Calu3 (cell line): ENCODE measurements at regions of chr2 and their contacts with region 1.

Region 1: DNA sequence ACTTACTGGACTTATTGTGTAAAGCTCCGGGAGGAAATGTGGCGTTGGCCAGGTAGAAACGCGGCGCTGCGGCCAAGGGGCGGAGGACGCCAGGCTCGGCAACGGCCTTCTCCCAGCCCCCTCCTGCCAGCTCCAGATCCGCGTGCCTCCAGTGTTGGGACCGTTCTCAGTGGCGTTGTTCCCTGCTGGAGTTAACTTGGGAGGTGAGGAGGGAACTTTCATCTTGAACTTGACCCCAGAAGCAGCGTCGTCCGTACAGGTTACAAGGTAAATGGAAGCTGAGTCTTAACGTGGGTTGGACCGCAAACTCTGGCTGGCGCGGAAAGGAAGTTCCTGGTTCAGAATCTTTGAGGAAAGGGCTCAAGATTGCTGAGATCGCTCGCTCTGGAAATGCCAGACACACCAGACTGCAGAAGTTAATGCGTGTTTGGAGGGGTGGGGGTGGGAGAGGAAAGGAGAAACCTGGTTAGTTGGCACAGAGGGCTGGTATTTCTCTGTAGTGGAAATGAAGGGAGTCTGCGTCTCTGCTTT is 1.3 kb downstream of the TANC1 start:
- DNase-seq: peak; percentile 50
- H3K4me3 Mint-ChIP-seq: peak overlapping the region; percentile 99
- H3K27ac Mint-ChIP-seq: peak overlapping the region; percentile 88
- H3K4me1 Mint-ChIP-seq: peaks cover 43% of the 10 kb centered on the region
- H3K27me3 Mint-ChIP-seq: no peaks in the 10 kb centered on the region
- CTCF ChIP-seq: no peak

Region 2: DNA sequence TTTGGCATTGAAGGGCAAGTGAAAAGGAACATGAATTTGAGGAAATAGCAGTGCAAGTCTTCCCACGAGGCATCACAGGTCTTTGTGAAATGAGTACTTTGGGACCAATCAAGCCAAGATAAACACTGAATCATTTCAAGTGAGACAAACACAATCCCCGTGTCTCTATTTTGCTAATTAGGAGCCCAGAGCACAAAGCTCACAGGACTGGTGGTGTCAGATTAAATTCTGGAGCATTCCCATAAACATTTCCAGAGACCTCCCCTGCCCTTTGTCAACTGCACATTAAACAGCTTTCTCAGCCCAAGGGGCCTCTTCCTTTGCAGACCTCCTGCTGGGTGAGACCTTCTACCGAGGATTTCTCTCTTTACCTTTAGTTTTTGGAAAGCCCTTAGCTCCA is 123.9 kb before region 1 on chr2:
- CTCF ChIA-PET with region 1: no interaction called
- intact Hi-C with region 1: no loop called
- DNase-seq: no peak
- H3K4me3 Mint-ChIP-seq: no peak overlapping the region
- H3K27ac Mint-ChIP-seq: no peak overlapping the region
- H3K4me1 Mint-ChIP-seq: no peaks in the 10 kb centered on the region
- H3K27me3 Mint-ChIP-seq: peaks cover 26% of the 10 kb centered on the region
- CTCF ChIP-seq: no peak

Region 3: DNA sequence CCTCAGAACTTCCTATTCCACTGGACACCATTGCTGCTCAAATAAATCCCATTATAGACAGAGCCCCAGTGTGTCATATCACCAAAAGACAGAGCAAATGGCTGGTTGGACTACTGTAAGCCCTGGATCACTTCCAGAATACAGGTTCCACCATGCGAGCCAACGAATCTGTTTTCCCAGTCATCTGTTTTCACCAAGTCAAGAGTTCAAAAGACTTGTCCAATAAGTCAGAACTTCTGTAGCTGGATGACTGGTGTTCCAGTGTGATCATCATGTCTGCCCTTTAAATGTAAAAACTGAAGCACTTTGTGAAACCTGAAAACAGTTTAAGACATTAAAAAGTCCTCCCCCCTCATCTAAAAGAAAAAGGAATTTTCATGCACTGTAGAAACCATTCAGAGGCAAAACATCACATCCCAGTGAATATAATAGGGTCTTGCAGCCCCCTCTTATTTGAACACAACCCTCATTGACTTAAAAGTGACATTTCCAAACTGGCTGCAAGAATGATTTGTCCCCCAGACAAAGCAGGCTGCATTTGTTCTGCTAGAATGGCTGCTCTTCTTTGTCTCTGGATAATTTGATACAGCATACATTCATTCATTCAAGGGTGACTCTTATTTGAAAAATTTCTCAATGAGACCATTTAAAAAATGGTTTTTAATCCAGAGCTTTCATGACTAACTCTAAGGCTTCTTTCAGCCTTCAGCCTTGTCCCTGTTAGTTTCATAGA is 65.9 kb before region 1 on chr2:
- CTCF ChIA-PET with region 1: no interaction called
- intact Hi-C with region 1: loop called (anchors 5 kb)
- DNase-seq: no peak
- H3K4me3 Mint-ChIP-seq: no peak overlapping the region
- H3K27ac Mint-ChIP-seq: no peak overlapping the region
- H3K4me1 Mint-ChIP-seq: no peaks in the 10 kb centered on the region
- H3K27me3 Mint-ChIP-seq: no peaks in the 10 kb centered on the region
- CTCF ChIP-seq: no peak

Region 4: DNA sequence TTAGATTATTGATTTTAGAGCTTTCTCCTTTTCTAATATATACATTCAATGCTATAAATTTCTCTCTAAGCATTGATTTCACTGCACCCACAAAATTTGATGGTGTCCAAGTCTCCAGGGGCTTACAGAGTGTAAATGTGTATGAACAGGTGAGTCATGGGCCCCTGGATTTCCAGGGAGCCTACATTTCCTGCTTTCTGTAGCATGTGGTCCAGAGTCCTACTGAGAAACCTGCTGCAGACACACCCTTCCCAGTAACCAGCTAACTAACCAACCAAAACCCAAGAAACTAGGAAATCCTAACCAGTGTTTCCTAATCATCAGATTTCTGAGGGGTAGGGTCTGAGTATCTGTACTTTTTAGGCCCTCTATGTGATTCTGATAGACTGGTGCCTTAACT is 40.8 kb before region 1 on chr2:
- CTCF ChIA-PET with region 1: no interaction called
- intact Hi-C with region 1: loop called (anchors 2 kb)
- DNase-seq: peak; percentile 44
- H3K4me3 Mint-ChIP-seq: no peak overlapping the region
- H3K27ac Mint-ChIP-seq: peak overlapping the region; percentile 66
- H3K4me1 Mint-ChIP-seq: peaks cover 70% of the 10 kb centered on the region
- H3K27me3 Mint-ChIP-seq: no peaks in the 10 kb centered on the region
- CTCF ChIP-seq: no peak

Region 5: DNA sequence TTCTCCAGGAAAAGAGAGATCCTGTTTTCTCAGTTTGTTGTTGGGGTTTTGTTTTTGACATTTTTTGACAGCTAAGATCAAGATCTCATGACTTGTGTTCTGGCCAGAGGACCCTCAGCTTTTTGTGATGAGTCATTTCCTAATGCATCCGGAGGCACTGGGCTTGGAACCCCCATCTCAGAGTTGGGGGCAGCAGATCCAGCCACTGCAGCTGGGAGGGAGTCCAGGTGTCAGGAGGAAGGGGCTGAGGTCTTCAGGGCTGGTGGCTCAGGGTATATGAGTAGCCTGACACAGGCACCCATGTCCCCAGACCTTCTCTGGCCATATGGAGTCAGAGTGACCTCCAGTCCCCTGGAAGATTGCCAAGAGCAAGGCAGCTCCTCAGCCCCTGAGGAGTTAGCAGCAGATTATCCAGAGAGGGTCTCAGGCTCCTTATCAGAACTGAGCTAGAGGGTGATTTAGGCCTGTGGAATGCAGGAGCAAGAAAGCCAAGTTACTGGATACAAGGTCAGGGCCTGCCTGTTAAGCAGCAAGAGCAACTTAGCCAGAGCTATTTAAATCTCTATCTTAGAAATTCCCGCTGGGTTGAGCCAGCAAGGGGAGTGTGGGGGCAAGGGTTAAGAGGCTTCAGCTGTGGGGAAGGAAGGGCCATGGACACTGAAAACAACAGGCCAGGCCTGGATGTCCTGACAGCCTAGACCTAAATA is 61.0 kb after region 1 on chr2:
- CTCF ChIA-PET with region 1: no interaction called
- intact Hi-C with region 1: loop called (anchors 5 kb)
- DNase-seq: peak; percentile 23
- H3K4me3 Mint-ChIP-seq: no peak overlapping the region
- H3K27ac Mint-ChIP-seq: peak overlapping the region; percentile 28
- H3K4me1 Mint-ChIP-seq: peaks cover 33% of the 10 kb centered on the region
- H3K27me3 Mint-ChIP-seq: no peaks in the 10 kb centered on the region
- CTCF ChIP-seq: no peak

Region 6: DNA sequence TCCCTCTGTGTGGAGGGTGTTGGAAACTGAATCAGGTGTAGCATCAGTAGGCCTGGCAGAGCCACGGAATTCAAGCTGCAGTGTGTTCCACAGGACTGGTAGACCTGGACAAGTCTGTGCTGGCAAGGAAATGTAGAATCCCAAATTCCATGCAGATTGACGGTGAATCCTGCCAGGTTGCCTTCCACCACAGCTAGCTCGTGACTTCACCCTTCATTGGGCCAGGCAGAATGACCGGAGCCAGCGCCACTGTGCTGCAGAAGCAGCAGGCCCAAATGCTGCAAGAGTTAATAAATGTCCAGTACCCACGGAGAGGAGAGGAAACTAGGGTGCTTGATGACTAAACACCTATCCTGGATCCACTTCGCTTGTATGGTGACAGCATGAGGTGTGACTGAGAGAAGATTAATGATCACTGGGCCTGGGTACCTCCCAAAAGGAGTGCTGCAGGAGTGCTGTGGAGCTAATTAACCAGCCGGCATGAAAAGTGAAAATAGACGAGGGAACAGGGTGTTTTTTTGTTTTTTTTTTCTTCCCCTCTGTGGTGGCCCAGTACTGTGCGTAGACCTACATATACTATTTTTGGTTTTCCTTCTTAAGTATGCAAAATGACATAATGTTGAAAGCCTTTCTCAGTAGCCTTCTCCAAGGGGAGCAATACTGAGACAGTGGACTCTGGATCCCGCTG is 120.9 kb after region 1 on chr2:
- CTCF ChIA-PET with region 1: no interaction called
- intact Hi-C with region 1: loop called (anchors 10 kb)
- DNase-seq: no peak
- H3K4me3 Mint-ChIP-seq: no peak overlapping the region
- H3K27ac Mint-ChIP-seq: peak overlapping the region; percentile 73
- H3K4me1 Mint-ChIP-seq: peaks cover 50% of the 10 kb centered on the region
- H3K27me3 Mint-ChIP-seq: no peaks in the 10 kb centered on the region
- CTCF ChIP-seq: no peak